Mammary epithelial cell (primary cell): ENCODE measurements at regions of chr1 and their contacts with region 1.

Region 1: GRCh38 chr1:216600730-216601609 is 122.3 kb downstream of the ESRRG start:
- DNase-seq: peak; percentile 53
- H3K4me3 ChIP-seq: peak overlapping the region; percentile 62 to 88 (median 62)
- H3K27ac ChIP-seq: peak overlapping the region; percentile 42
- H3K4me1 ChIP-seq: peaks cover 6% of the 10 kb centered on the region
- H3K27me3 ChIP-seq: no peaks in the 10 kb centered on the region
- CTCF ChIP-seq: peak; percentile 28 to 59

Region 2: GRCh38 chr1:216325336-216325735 is 275.6 kb before region 1 on chr1:
- CTCF ChIA-PET with region 1: no interaction called
- dilution Hi-C with region 1: no loop called
- in situ Hi-C with region 1: no loop called
- intact Hi-C with region 1: no loop called
- DNase-seq: no peak
- H3K4me3 ChIP-seq: no peak overlapping the region
- H3K27ac ChIP-seq: no peak overlapping the region
- H3K4me1 ChIP-seq: peaks cover 7% of the 10 kb centered on the region
- H3K27me3 ChIP-seq: no peaks in the 10 kb centered on the region
- CTCF ChIP-seq: no peak

Region 3: GRCh38 chr1:216478238-216478637 is 122.7 kb before region 1 on chr1:
- CTCF ChIA-PET with region 1: no interaction called
- dilution Hi-C with region 1: no loop called
- in situ Hi-C with region 1: no loop called
- intact Hi-C with region 1: no loop called
- DNase-seq: no peak
- H3K4me3 ChIP-seq: no peak overlapping the region
- H3K27ac ChIP-seq: no peak overlapping the region
- H3K4me1 ChIP-seq: no peaks in the 10 kb centered on the region
- H3K27me3 ChIP-seq: no peaks in the 10 kb centered on the region
- CTCF ChIP-seq: no peak

Region 4: GRCh38 chr1:216632980-216633379 is 32.0 kb after region 1 on chr1:
- CTCF ChIA-PET with region 1: no interaction called
- dilution Hi-C with region 1: no loop called
- in situ Hi-C with region 1: no loop called
- intact Hi-C with region 1: no loop called
- DNase-seq: no peak
- H3K4me3 ChIP-seq: no peak overlapping the region
- H3K27ac ChIP-seq: no peak overlapping the region
- H3K4me1 ChIP-seq: no peaks in the 10 kb centered on the region
- H3K27me3 ChIP-seq: no peaks in the 10 kb centered on the region
- CTCF ChIP-seq: no peak

Region 5: DNA sequence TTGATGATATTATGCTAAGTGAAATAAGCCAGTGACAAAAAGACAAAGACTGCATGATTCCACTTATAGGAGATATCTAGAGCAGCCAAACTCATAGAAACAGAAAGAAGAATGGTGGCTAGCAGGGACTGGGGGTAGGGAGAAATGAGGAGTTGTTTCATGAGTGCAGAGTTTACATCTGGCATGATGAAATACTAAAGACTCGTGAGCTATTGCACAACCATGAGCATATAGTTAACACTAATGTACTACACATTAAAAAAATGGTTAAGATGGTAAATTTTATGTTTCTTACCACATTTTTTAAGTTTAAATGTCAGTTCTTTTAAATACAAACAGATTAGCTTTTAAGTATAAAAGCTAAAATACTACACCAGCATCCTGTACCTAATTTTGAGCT is 64.4 kb after region 1 on chr1:
- CTCF ChIA-PET with region 1: no interaction called
- dilution Hi-C with region 1: no loop called
- in situ Hi-C with region 1: no loop called
- intact Hi-C with region 1: no loop called
- DNase-seq: peak; percentile 2
- H3K4me3 ChIP-seq: no peak overlapping the region
- H3K27ac ChIP-seq: no peak overlapping the region
- H3K4me1 ChIP-seq: no peaks in the 10 kb centered on the region
- H3K27me3 ChIP-seq: no peaks in the 10 kb centered on the region
- CTCF ChIP-seq: no peak

Region 6: GRCh38 chr1:216723274-216723780 is 122.4 kb after region 1 on chr1 and contains the start of gene ESRRG:
- CTCF ChIA-PET with region 1: no interaction called
- dilution Hi-C with region 1: no loop called
- in situ Hi-C with region 1: no loop called
- intact Hi-C with region 1: loop called (anchors 10 kb)
- DNase-seq: no peak
- H3K4me3 ChIP-seq: peak within 1 kb of the TSS; percentile 8 to 36 (median 11)
- H3K27ac ChIP-seq: no peak within 1 kb of the TSS
- H3K4me1 ChIP-seq: peaks cover 9% of the 10 kb centered on the region
- H3K27me3 ChIP-seq: peaks cover 13% of the 10 kb centered on the region
- CTCF ChIP-seq: no peak
- total RNA-seq, gene ESRRG: 0.17 to 0.40 TPM